GM12878 (cell line): ENCODE measurements at regions of chr11 and their contacts with region 1.

Region 1: GRCh38 chr11:14308114-14308896 is 50.7 kb downstream of the RRAS2 start:
- DNase-seq: no peak
- ATAC-seq: peak; percentile 64
- H3K4me3 ChIP-seq: no peak overlapping the region
- H3K27ac ChIP-seq: peak overlapping the region; percentile 64
- H3K4me1 ChIP-seq: peaks cover 49% of the 10 kb centered on the region
- H3K27me3 ChIP-seq: no peaks in the 10 kb centered on the region
- CTCF ChIP-seq: peak; percentile 62 to 67 (median 66)
- EP300 ChIP-seq: no peak
- POLR2A ChIP-seq: no peak
- RAD21 ChIP-seq: peak; percentile 61

Region 2: GRCh38 chr11:14320020-14320419 is 11.7 kb after region 1 on chr11:
- CTCF ChIA-PET with region 1: interaction called, 33 read pairs
- POLR2A ChIA-PET with region 1: interaction called, 16 read pairs
- RAD21 ChIA-PET with region 1: interaction called, 31 read pairs
- SMC1A ChIA-PET with region 1: interaction called, 53 read pairs
- in situ Hi-C with region 1: no loop called
- intact Hi-C with region 1: no loop called
- DNase-seq: peak; percentile 90
- ATAC-seq: peak; percentile 40
- H3K4me3 ChIP-seq: peak overlapping the region; percentile 57
- H3K27ac ChIP-seq: peak overlapping the region; percentile 69
- H3K4me1 ChIP-seq: peaks cover 30% of the 10 kb centered on the region
- H3K27me3 ChIP-seq: no peaks in the 10 kb centered on the region
- CTCF ChIP-seq: no peak
- EP300 ChIP-seq: peak in 1 of 2 experiments; percentile 58; a peak in 1 of 4 replicates
- POLR2A ChIP-seq: no peak
- RAD21 ChIP-seq: no peak

Region 3: DNA sequence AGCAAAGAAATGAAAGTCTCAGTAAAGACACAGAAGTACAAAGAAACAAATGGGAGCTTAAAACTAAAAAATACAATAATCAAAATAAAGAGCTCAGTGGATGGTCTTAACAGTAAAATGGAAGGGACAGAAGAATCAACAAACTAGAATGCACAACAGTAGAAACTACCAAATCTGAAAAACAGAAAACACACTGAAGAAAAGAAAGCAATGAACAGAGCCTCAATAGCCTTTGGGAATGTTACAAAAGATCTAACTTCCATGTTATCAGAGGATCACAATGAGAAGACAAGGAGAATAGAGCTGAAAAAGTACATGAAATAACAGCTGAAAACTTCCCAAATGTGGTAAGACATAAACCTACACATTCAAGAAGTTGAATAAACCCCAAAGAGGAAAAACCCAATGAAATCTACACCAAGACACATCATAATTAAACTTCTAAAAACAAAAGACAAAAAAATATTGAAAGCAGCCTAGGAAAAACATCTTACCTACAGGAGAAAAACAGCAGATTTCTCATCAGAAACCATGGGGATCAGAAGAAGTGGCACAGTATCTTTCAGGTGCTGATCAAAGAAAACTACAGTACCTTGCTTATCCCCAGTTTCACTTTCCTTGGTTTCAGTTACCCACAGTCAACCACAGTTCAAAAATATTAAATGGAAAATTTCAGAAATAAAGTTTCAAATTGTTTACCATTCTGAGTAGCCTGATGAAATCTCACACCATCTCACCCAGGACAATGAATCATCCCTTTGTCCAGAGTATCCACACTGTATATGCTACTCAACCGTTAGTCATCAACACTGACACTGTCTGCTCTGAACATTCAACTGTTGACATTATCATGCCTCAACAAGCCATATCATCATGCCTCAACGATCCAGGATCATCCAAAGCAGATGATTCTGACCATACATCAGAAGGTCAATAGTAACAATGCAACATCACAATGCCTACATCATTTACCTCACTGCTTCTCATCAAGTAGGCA is 28.5 kb after region 1 on chr11:
- CTCF ChIA-PET with region 1: interaction called, 16 read pairs
- POLR2A ChIA-PET with region 1: interaction called, 11 read pairs
- RAD21 ChIA-PET with region 1: interaction called, 34 read pairs
- SMC1A ChIA-PET with region 1: interaction called, 89 read pairs
- in situ Hi-C with region 1: no loop called
- intact Hi-C with region 1: no loop called
- DNase-seq: no peak
- ATAC-seq: peak; percentile 40
- H3K4me3 ChIP-seq: no peak overlapping the region; the same call in 1 of the 2 replicates
- H3K27ac ChIP-seq: no peak overlapping the region; the same call in 1 of the 2 replicates
- H3K4me1 ChIP-seq: peaks cover 22% of the 10 kb centered on the region; the same call in 1 of the 2 replicates
- H3K27me3 ChIP-seq: no peaks in the 10 kb centered on the region
- CTCF ChIP-seq: no peak
- EP300 ChIP-seq: no peak
- POLR2A ChIP-seq: no peak
- RAD21 ChIP-seq: no peak

Region 4: DNA sequence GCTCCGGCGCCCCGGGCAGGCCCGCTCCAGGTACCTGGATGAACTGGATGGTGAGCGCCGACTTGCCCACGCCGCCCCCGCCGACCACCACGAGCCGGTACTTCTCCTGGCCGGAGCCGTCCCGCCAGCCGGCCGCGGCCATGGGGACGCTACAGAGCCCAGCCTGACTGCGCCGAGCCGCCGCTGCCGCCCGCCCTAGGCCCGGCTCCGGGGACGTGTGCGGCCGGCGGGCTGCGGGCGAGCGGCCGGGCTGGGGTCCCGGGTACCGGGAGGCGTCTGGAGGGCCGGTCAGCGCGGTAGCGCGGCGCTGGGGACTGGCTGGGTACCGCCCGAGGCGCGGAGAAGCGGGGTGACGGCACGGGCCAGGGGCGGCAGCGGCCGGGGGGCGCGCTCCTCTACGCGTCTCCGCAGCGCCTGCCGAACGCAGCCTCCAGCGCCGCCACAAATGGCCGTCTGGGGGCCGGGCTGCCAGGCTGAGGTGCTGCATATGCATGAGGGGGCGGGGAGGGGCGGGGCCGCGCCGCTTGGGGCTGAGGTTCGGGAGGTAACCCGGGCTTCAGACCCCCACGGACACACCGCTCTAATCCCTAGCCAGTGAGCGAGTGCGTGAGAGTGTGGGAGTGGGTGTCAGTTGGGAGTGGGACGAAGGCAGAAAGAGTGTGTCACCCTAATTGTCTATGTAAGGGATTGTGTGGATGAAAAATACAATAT is 50.6 kb after region 1 on chr11 and contains the start of gene RRAS2:
- CTCF ChIA-PET with region 1: interaction called, 14 read pairs
- POLR2A ChIA-PET with region 1: interaction called, 8 read pairs
- RAD21 ChIA-PET with region 1: interaction called, 26 read pairs
- SMC1A ChIA-PET with region 1: interaction called, 49 read pairs
- in situ Hi-C with region 1: no loop called
- intact Hi-C with region 1: loop called (anchors 2 kb)
- DNase-seq: no peak
- ATAC-seq: peak; percentile 88
- H3K4me3 ChIP-seq: peak within 1 kb of the TSS; percentile 90
- H3K27ac ChIP-seq: peak within 1 kb of the TSS; percentile 86
- H3K4me1 ChIP-seq: peaks cover 4% of the 10 kb centered on the region; the same call in 1 of the 2 replicates
- H3K27me3 ChIP-seq: no peaks in the 10 kb centered on the region
- CTCF ChIP-seq: 0 out of 6 replicates have a peak, but pooled peaks of 2 of the 3 experiments have one; percentile 6 to 11
- EP300 ChIP-seq: no peak
- POLR2A ChIP-seq: peak; percentile 92
- RAD21 ChIP-seq: 0 out of 2 replicates have a peak, but pooled peaks have one; percentile 14
- polyA plus RNA-seq, gene RRAS2: 26.9 to 33.3 TPM

Region 5: DNA sequence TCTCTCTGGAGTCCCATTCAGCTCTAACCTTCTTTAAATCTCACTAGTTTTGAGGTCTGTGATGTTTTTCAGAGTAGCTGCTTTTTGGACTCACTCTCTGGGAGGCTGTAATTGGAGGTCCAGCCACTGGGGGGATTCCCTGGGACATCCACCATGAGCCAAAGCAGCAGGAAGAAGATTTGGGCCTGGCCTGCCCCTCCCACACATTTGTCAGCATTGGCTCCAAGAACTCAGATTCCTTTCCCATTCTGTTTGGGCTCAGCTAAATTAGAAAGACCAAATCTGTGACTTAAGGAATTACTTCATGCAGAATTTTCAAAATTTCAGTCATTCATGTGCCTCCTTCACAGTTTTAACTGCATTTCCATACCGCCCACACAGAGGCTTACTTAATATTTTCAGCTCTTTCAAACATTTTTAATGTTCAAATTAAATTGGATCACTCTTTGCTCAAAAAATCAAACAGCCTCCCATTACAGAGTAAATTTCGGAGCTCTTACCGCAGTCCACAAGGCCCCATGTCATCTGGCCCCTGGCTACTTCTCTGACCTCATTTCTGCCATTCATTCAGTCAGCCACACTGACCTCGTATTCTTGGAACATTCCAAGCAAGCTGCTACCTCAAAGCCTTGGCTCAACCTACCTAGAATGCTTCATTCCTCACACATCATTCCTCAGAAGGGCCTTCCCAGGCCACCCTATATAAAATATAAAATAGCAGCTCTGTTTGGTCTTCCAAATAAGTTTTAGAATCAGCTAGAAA is 105.2 kb after region 1 on chr11:
- CTCF ChIA-PET with region 1: interaction called, 271 read pairs
- POLR2A ChIA-PET with region 1: interaction called, 4 read pairs
- RAD21 ChIA-PET with region 1: interaction called, 123 read pairs
- SMC1A ChIA-PET with region 1: interaction called, 120 read pairs
- in situ Hi-C with region 1: no loop called
- intact Hi-C with region 1: no loop called
- DNase-seq: no peak
- ATAC-seq: peak; percentile 22; the same call in 1 of the 3 replicates
- H3K4me3 ChIP-seq: no peak overlapping the region
- H3K27ac ChIP-seq: no peak overlapping the region
- H3K4me1 ChIP-seq: peaks cover 10% of the 10 kb centered on the region
- H3K27me3 ChIP-seq: no peaks in the 10 kb centered on the region
- CTCF ChIP-seq: peak in 1 of 3 experiments; percentile 32; a peak in 1 of 6 replicates
- EP300 ChIP-seq: no peak
- POLR2A ChIP-seq: no peak
- RAD21 ChIP-seq: no peak

Region 6: DNA sequence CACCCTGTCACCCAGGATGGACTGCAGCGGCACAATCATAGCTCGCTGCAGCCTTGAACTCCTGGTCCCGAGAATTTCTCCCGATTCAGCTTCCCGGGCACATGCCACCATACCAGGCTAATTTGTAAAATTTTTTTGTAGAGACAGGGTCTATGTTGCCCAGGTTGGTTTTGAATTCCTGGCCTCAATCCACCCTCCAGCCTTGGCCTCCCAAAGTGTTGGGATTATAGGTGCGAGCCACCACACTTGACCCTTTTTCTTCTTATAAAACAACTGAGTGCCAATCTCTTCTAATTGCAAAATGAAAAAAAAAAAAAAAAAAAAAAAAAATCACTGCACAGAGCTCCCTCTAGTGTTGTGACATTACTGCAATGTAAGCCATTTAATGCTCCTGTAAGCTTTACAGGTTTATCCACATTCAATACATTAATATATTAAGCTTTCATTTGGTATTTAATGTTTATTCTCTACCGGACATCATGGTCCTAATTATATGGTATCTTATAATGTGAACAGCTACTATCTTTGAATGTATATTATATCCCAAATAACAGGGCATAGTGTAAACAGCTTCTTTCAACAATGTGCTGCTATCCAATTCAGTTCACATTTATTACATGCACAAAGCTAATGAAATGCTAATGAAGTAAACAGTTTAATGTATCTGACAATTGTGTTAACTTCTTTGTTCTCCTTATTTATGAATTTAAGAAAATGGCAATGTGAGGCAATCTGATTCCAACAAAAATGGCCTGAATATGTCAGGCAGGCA is 146.7 kb after region 1 on chr11:
- CTCF ChIA-PET with region 1: interaction called, 238 read pairs
- POLR2A ChIA-PET with region 1: interaction called, 3 read pairs
- RAD21 ChIA-PET with region 1: interaction called, 117 read pairs
- SMC1A ChIA-PET with region 1: interaction called, 138 read pairs
- in situ Hi-C with region 1: no loop called
- intact Hi-C with region 1: no loop called
- DNase-seq: no peak
- ATAC-seq: peak; percentile 65
- H3K4me3 ChIP-seq: no peak overlapping the region
- H3K27ac ChIP-seq: no peak overlapping the region
- H3K4me1 ChIP-seq: no peaks in the 10 kb centered on the region
- H3K27me3 ChIP-seq: no peaks in the 10 kb centered on the region
- CTCF ChIP-seq: peak; percentile 51 to 66 (median 56); a peak in 5 of 6 replicates
- EP300 ChIP-seq: no peak
- POLR2A ChIP-seq: no peak
- RAD21 ChIP-seq: peak; percentile 65